GM12878 (cell line): ENCODE measurements at regions of chr12 and their contacts with region 1.

Region 1: GRCh38 chr12:46268590-46269558 is at the start of gene SLC38A1:
- DNase-seq: no peak
- ATAC-seq: peak; percentile 75
- H3K4me3 ChIP-seq: peak within 1 kb of the TSS; percentile 82
- H3K27ac ChIP-seq: peak within 1 kb of the TSS; percentile 95
- H3K4me1 ChIP-seq: peaks cover 8% of the 10 kb centered on the region; the same call in 1 of the 2 replicates
- H3K27me3 ChIP-seq: no peaks in the 10 kb centered on the region
- CTCF ChIP-seq: peak in 1 of 3 experiments; percentile 11; a peak in 2 of 6 replicates
- EP300 ChIP-seq: no peak; a peak in 1 of 4 replicates
- POLR2A ChIP-seq: peak; percentile 97
- RAD21 ChIP-seq: peak; percentile 31; the same call in 1 of the 2 replicates
- polyA plus RNA-seq, gene SLC38A1: 38.1 to 64.0 TPM

Region 2: GRCh38 chr12:45990468-45991283 is 278.2 kb before region 1 on chr12 and contains the start of gene SCAF11:
- CTCF ChIA-PET with region 1: interaction called, 5 read pairs
- POLR2A ChIA-PET with region 1: interaction called, 5 read pairs
- RAD21 ChIA-PET with region 1: interaction called, 4 read pairs
- SMC1A ChIA-PET with region 1: interaction called, 3 read pairs
- in situ Hi-C with region 1: no loop called
- intact Hi-C with region 1: loop called (anchors 2 kb)
- DNase-seq: peak; percentile 99
- ATAC-seq: peak; percentile 85
- H3K4me3 ChIP-seq: peak within 1 kb of the TSS; percentile 92
- H3K27ac ChIP-seq: peak within 1 kb of the TSS; percentile 99
- H3K4me1 ChIP-seq: peaks cover 8% of the 10 kb centered on the region
- H3K27me3 ChIP-seq: no peaks in the 10 kb centered on the region
- CTCF ChIP-seq: peak; percentile 93 to 99 (median 98); a peak in 5 of 6 replicates
- EP300 ChIP-seq: peak; percentile 37 to 53; a peak in 2 of 4 replicates
- POLR2A ChIP-seq: peak; percentile 88
- RAD21 ChIP-seq: peak; percentile 88
- polyA plus RNA-seq, gene SCAF11: 42.0 to 44.9 TPM

Region 3: GRCh38 chr12:46043972-46044520 is 224.8 kb before region 1 on chr12:
- CTCF ChIA-PET with region 1: no interaction called
- POLR2A ChIA-PET with region 1: no interaction called
- RAD21 ChIA-PET with region 1: no interaction called
- SMC1A ChIA-PET with region 1: no interaction called
- in situ Hi-C with region 1: no loop called
- intact Hi-C with region 1: no loop called
- DNase-seq: no peak
- ATAC-seq: no peak
- H3K4me3 ChIP-seq: no peak overlapping the region
- H3K27ac ChIP-seq: no peak overlapping the region
- H3K4me1 ChIP-seq: no peaks in the 10 kb centered on the region
- H3K27me3 ChIP-seq: no peaks in the 10 kb centered on the region
- CTCF ChIP-seq: no peak
- EP300 ChIP-seq: no peak
- POLR2A ChIP-seq: no peak
- RAD21 ChIP-seq: no peak

Region 4: GRCh38 chr12:46179683-46180452 is 89.0 kb before region 1 on chr12:
- CTCF ChIA-PET with region 1: interaction called, 5 read pairs
- POLR2A ChIA-PET with region 1: interaction called, 16 read pairs
- RAD21 ChIA-PET with region 1: interaction called, 23 read pairs
- SMC1A ChIA-PET with region 1: interaction called, 31 read pairs
- in situ Hi-C with region 1: no loop called
- intact Hi-C with region 1: no loop called
- DNase-seq: peak; percentile 76
- ATAC-seq: peak; percentile 70
- H3K4me3 ChIP-seq: no peak overlapping the region
- H3K27ac ChIP-seq: peak overlapping the region; percentile 47
- H3K4me1 ChIP-seq: peaks cover 34% of the 10 kb centered on the region
- H3K27me3 ChIP-seq: no peaks in the 10 kb centered on the region
- CTCF ChIP-seq: no peak
- EP300 ChIP-seq: peak; percentile 78 to 85; a peak in 3 of 4 replicates
- POLR2A ChIP-seq: no peak
- RAD21 ChIP-seq: no peak

Region 5: DNA sequence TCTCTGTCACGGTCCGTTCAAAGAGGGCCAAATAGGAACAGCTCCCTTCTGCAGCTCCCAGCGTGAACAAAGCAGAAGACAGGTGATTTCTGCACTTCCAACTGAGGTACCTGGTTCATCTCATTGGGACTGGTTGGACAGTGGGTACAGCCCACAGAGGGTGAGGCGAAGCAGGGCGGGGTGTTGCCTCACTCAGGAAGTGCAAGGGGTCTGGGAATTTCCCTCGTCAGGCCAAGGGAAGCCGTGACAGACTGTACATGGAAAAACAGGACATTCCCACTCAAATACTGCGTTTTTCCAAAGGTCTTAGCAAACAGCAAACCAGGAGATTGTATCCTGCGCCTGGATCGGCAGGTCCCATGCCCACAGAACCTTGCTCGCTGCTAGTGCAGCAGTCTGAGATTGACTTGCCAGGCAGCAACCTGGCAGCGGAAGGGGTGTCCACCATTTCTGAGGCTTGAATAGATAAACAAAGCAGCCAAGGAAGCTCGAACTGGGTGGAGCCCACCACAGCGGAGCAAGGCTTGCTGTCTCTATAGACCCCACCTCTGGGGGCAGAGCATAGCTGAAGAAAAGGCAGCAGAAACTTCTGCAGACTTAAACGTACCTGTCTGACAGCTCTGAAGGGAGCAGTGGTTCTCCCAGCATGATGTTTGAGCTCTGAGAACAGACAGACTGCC is 22.7 kb before region 1 on chr12:
- CTCF ChIA-PET with region 1: interaction called, 3 read pairs
- POLR2A ChIA-PET with region 1: no interaction called
- RAD21 ChIA-PET with region 1: interaction called, 3 read pairs
- SMC1A ChIA-PET with region 1: interaction called, 15 read pairs
- in situ Hi-C with region 1: no loop called
- intact Hi-C with region 1: no loop called
- DNase-seq: no peak
- ATAC-seq: no peak
- H3K4me3 ChIP-seq: no peak overlapping the region
- H3K27ac ChIP-seq: no peak overlapping the region
- H3K4me1 ChIP-seq: no peaks in the 10 kb centered on the region; the same call in 1 of the 2 replicates
- H3K27me3 ChIP-seq: no peaks in the 10 kb centered on the region
- CTCF ChIP-seq: no peak
- EP300 ChIP-seq: no peak
- POLR2A ChIP-seq: no peak
- RAD21 ChIP-seq: no peak

Region 6: GRCh38 chr12:46372544-46373110 is 103.8 kb after region 1 on chr12 and contains the start of gene SLC38A2:
- CTCF ChIA-PET with region 1: no interaction called
- POLR2A ChIA-PET with region 1: interaction called, 3 read pairs
- RAD21 ChIA-PET with region 1: interaction called, 14 read pairs
- SMC1A ChIA-PET with region 1: interaction called, 4 read pairs
- in situ Hi-C with region 1: loop called (anchors 5 kb)
- intact Hi-C with region 1: loop called (anchors 2 kb)
- DNase-seq: no peak
- ATAC-seq: peak; percentile 90
- H3K4me3 ChIP-seq: peak within 1 kb of the TSS; percentile 84
- H3K27ac ChIP-seq: peak within 1 kb of the TSS; percentile 85
- H3K4me1 ChIP-seq: peaks cover 10% of the 10 kb centered on the region
- H3K27me3 ChIP-seq: no peaks in the 10 kb centered on the region
- CTCF ChIP-seq: no peak
- EP300 ChIP-seq: no peak
- POLR2A ChIP-seq: peak; percentile 99
- RAD21 ChIP-seq: no peak
- polyA plus RNA-seq, gene SLC38A2: 36.2 to 47.3 TPM